ENCODE measurements at regions of chr6 and their contacts with region 1.

Region 1: GRCh38 chr6:159174263-159174969 is 5.2 kb downstream of the FNDC1 start:
- DNase-seq: no peak
- H3K4me3 ChIP-seq: no peak overlapping the region
- H3K27ac ChIP-seq: no peak overlapping the region
- H3K4me1 ChIP-seq: no peaks in the 10 kb centered on the region
- H3K27me3 ChIP-seq: no peaks in the 10 kb centered on the region
- CTCF ChIP-seq: peak; percentile 45 to 71 (median 50)
- POLR2A ChIP-seq: no peak

Region 2: GRCh38 chr6:159212028-159212427 is 37.6 kb after region 1 on chr6:
- intact Hi-C with region 1: loop called (anchors 1 kb)
- DNase-seq: no peak
- H3K4me3 ChIP-seq: no peak overlapping the region
- H3K27ac ChIP-seq: no peak overlapping the region
- H3K4me1 ChIP-seq: no peaks in the 10 kb centered on the region
- H3K27me3 ChIP-seq: no peaks in the 10 kb centered on the region
- CTCF ChIP-seq: no peak
- POLR2A ChIP-seq: no peak

Region 3: GRCh38 chr6:159654483-159655098 is 480.2 kb after region 1 on chr6:
- intact Hi-C with region 1: loop called (anchors 10 kb)
- DNase-seq: no peak
- H3K4me3 ChIP-seq: no peak overlapping the region
- H3K27ac ChIP-seq: no peak overlapping the region
- H3K4me1 ChIP-seq: no peaks in the 10 kb centered on the region
- H3K27me3 ChIP-seq: no peaks in the 10 kb centered on the region
- CTCF ChIP-seq: peak; percentile 19 to 53 (median 49)
- POLR2A ChIP-seq: no peak